BJ (cell line): ENCODE measurements at regions of chr12 and their contacts with region 1.

Region 1: DNA sequence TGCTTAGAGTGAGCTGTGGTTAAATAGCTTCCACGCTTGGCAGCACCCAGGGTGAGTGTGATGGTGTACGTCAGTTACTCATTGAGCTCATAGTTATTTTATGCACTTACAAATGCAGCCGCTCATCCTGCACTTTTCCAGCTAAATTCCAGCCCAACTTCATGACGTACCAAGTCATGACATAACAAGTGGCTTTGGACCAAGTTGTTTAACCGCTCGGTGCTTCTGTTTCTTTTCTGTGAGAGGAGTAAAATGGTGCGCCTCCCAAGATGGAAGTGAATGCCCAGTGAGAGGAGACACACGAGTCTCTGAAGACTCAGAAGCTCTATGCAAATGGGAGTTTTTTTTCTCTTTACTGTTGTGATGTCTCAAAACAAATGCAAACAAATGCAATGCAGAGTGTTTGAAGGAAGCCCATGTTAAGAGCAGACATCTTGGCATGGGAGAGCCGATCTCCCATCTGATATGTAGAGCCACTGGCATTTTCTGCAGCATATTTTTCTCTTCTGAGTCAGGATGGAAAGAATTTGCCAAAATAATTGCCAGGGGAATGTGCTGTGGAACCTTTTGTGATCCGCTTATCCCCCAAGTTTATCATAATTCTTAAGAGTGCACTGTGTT is 72.2 kb downstream of the FBXW8 start:
- DNase-seq: peak; percentile 50
- H3K4me3 ChIP-seq: no peak overlapping the region; the same call in 1 of the 2 replicates
- H3K27me3 ChIP-seq: no peaks in the 10 kb centered on the region
- CTCF ChIP-seq: no peak

Region 2: DNA sequence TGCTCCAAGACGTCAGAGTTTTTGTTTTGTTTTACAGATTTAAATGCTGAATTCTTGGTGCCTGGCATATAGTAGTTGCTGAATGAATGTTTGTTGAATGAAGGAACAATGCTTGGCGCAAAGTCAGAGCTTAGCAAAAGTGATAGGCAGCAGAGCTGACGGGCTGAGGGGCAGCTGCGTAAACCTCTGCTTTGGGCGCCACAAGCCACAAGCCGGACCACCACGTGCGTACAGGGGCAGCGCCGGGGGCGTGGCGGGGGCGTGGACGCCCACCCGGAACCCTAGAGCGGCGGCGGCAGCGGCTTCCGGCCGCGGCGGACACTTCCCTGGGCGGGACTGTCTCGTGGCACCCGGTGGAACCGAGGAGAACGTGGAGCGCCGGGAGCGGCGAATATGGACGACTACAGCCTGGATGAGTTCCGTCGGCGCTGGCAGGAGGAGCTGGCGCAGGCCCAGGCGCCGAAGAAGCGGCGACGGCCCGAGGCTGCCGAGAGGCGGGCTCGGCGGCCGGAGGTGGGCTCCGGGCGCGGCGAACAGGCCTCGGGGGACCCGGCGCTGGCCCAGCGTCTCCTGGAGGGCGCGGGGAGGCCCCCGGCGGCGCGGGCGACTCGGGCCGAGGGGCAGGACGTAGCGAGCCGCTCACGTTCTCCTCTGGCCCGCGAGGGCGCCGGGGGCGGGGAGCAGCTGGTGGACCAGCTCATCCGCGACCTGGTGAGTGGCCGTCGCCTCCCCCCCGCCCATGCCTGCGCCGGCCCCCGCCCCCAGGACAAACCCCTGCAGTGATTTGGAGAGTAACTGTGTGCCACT is 72.1 kb before region 1 on chr12 and contains the start of gene FBXW8:
- CTCF ChIA-PET with region 1: no interaction called
- POLR2A ChIA-PET with region 1: interaction called, 10 read pairs
- DNase-seq: no peak
- H3K4me3 ChIP-seq: peak within 1 kb of the TSS; percentile 60
- H3K27me3 ChIP-seq: peaks cover 6% of the 10 kb centered on the region; the same call in 1 of the 2 replicates
- CTCF ChIP-seq: no peak
- polyA plus RNA-seq, gene FBXW8: 23.2 and 27.3 TPM in 2 replicates